PC-9 (cell line): ENCODE measurements at regions of chr6 and their contacts with region 1.

Region 1: DNA sequence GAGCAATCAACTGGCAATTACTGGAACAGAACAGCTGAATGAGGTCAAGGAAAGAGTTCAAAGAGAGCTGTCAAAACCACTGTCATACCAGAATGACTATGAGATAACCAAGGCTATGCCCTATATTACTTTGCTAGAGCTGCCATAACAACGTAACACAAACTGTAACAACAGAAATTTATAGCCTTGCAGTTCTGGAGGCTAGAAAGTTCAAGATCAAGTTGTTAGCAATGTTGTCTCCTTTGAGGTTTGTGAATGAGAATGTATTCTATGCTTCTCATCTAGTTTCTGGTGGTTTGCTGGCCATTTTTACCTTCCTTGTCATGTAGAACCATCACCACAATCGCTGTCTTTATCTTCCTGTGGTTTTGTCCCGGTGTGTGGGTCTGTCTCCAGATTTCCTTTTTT is 1323.0 kb upstream of the GJE1 start:
- DNase-seq: no peak
- H3K4me3 ChIP-seq: no peak overlapping the region
- H3K27ac ChIP-seq: no peak overlapping the region
- H3K4me1 ChIP-seq: no peaks in the 10 kb centered on the region
- H3K27me3 ChIP-seq: no peaks in the 10 kb centered on the region
- CTCF ChIP-seq: no peak

Region 2: GRCh38 chr6:140846503-140847261 is 37.0 kb after region 1 on chr6:
- CTCF ChIA-PET with region 1: no interaction called
- POLR2A ChIA-PET with region 1: interaction called, 16 read pairs
- intact Hi-C with region 1: no loop called
- DNase-seq: no peak
- H3K4me3 ChIP-seq: no peak overlapping the region
- H3K27ac ChIP-seq: no peak overlapping the region
- H3K4me1 ChIP-seq: peaks cover 17% of the 10 kb centered on the region
- H3K27me3 ChIP-seq: no peaks in the 10 kb centered on the region
- CTCF ChIP-seq: no peak

Region 3: GRCh38 chr6:141097471-141097870 is 287.8 kb after region 1 on chr6:
- CTCF ChIA-PET with region 1: no interaction called
- POLR2A ChIA-PET with region 1: no interaction called
- intact Hi-C with region 1: no loop called
- DNase-seq: no peak
- H3K4me3 ChIP-seq: no peak overlapping the region
- H3K27ac ChIP-seq: no peak overlapping the region
- H3K4me1 ChIP-seq: no peaks in the 10 kb centered on the region
- H3K27me3 ChIP-seq: no peaks in the 10 kb centered on the region
- CTCF ChIP-seq: no peak

Region 4: DNA sequence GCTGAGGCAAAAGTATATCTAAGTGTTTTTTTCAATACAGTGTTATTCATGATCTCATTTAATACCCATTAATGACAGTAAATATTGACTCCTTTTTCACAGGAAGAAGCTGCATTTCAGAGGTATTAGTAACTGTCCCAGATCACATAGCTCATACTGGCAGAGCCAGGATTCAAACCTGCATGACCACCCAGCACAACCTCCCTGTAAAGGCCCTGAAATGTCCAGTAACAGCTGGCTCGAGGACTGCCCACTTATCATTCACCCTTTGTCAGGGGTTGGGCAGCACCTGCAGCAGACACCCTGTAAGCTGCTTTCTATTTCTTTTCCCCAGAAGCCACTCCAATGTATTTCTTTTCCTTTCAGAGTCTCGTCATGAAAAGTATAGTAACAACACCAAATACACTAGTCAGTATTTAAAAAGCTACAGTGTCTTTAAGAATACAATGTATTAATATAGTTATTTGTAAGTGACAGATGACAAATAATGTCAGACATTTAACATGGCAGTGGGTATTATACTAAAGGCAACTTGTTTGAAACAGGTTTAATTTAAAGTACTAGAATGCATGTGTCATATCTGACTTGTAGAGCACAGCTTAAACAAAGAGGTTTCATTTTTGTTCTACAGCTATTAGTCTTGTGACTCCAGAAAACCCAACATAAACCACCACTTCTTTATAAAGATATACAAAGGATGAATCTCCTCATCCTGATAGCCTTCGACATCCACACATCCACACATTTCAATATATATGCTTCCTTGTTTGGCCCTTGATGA is 481.4 kb after region 1 on chr6:
- CTCF ChIA-PET with region 1: no interaction called
- POLR2A ChIA-PET with region 1: no interaction called
- intact Hi-C with region 1: no loop called
- DNase-seq: no peak
- H3K4me3 ChIP-seq: no peak overlapping the region
- H3K27ac ChIP-seq: no peak overlapping the region
- H3K4me1 ChIP-seq: no peaks in the 10 kb centered on the region
- H3K27me3 ChIP-seq: no peaks in the 10 kb centered on the region
- CTCF ChIP-seq: no peak